ENCODE measurements at regions of chr1 and their contacts with region 1.

Region 1: DNA sequence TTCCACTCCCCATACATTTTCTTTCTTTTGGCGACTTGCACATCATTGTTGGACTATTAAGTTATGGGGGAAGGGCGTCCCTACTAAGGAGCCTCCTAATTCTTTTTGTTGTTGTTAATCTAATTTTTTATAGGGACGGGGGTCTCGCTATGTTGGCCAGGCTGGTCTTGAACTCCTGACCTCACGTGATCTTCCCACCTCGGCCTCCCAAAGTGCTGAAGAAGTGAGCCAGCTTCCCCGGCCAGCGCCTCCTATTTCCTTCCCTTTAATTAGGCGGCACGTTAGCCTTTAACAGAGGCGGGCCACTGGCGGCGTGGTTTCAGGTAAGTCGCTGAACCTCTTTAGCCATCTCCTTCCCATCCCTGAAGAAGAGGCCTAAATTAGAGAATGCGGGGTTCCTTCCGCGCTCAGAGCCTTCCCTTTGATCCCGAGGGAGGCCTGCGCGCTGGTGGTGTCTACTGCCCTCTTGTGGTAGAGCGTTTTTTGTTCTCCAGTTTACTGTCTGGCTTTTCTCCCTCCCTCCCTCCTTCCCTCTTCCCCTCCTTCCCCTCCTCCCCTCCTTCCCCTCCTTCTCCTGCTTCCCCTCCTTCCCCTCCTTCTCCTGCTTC is 38.1 kb downstream of the TNFRSF9 start:
- DNase-seq: peak; percentile 43 to 86
- ATAC-seq: peak; percentile 51 to 75 (median 69)
- H3K4me3 ChIP-seq: peak overlapping the region; percentile 1
- H3K4me3 Mint-ChIP-seq: peak overlapping the region; percentile 82
- H3K27ac ChIP-seq: no peak overlapping the region
- H3K27ac Mint-ChIP-seq: peak overlapping the region; percentile 85
- H3K4me1 ChIP-seq: peaks cover 35% of the 10 kb centered on the region
- H3K4me1 Mint-ChIP-seq: peaks cover 48 to 60% of the 10 kb centered on the region in 2 donors
- H3K27me3 ChIP-seq: no peaks in the 10 kb centered on the region
- H3K27me3 Mint-ChIP-seq: no peaks in the 10 kb centered on the region
- CTCF ChIP-seq: peak; percentile 68

Region 2: GRCh38 chr1:7667625-7668218 is 234.9 kb before region 1 on chr1:
- intact Hi-C with region 1: loop called (anchors 2 kb)
- DNase-seq: peak; percentile 86 to 88
- ATAC-seq: peak; percentile 83 to 94 (median 88)
- H3K4me3 ChIP-seq: no peak overlapping the region
- H3K4me3 Mint-ChIP-seq: no peak overlapping the region
- H3K27ac ChIP-seq: no peak overlapping the region
- H3K27ac Mint-ChIP-seq: no peak overlapping the region
- H3K4me1 ChIP-seq: peaks cover 16% of the 10 kb centered on the region
- H3K4me1 Mint-ChIP-seq: peaks cover 0 to 11% of the 10 kb centered on the region in 2 donors
- H3K27me3 ChIP-seq: no peaks in the 10 kb centered on the region
- H3K27me3 Mint-ChIP-seq: peaks cover 0 to 5% of the 10 kb centered on the region in 2 donors
- CTCF ChIP-seq: peak; percentile 94

Region 3: GRCh38 chr1:7808253-7808844 is 94.2 kb before region 1 on chr1:
- intact Hi-C with region 1: loop called (anchors 1 kb)
- DNase-seq: peak in 1 of 2 donors; percentile 54
- ATAC-seq: peak; percentile 37 to 89 (median 86)
- H3K4me3 ChIP-seq: no peak overlapping the region
- H3K4me3 Mint-ChIP-seq: no peak overlapping the region
- H3K27ac ChIP-seq: no peak overlapping the region
- H3K27ac Mint-ChIP-seq: peak overlapping the region in 1 of 2 donors; percentile 18
- H3K4me1 ChIP-seq: no peaks in the 10 kb centered on the region
- H3K4me1 Mint-ChIP-seq: peaks cover 0 to 5% of the 10 kb centered on the region in 2 donors
- H3K27me3 ChIP-seq: no peaks in the 10 kb centered on the region
- H3K27me3 Mint-ChIP-seq: no peaks in the 10 kb centered on the region
- CTCF ChIP-seq: peak; percentile 62

Region 4: GRCh38 chr1:7940745-7941436 is 38.3 kb after region 1 on chr1 and contains the start of gene TNFRSF9:
- intact Hi-C with region 1: loop called (anchors 2 kb)
- DNase-seq: peak; percentile 69 to 83
- ATAC-seq: peak; percentile 84 to 88 (median 86)
- H3K4me3 ChIP-seq: no peak within 1 kb of the TSS
- H3K4me3 Mint-ChIP-seq: peak within 1 kb of the TSS; percentile 87
- H3K27ac ChIP-seq: no peak within 1 kb of the TSS
- H3K27ac Mint-ChIP-seq: peak within 1 kb of the TSS; percentile 58 to 89
- H3K4me1 ChIP-seq: peaks cover 26% of the 10 kb centered on the region
- H3K4me1 Mint-ChIP-seq: peaks cover 50 to 52% of the 10 kb centered on the region in 2 donors
- H3K27me3 ChIP-seq: no peaks in the 10 kb centered on the region
- H3K27me3 Mint-ChIP-seq: no peaks in the 10 kb centered on the region
- CTCF ChIP-seq: no peak
- total RNA-seq, gene TNFRSF9: 2.6 to 6.4 (median 4.2) TPM

Region 5: GRCh38 chr1:7961216-7962015 is 58.8 kb after region 1 on chr1 and contains the start of gene PARK7:
- intact Hi-C with region 1: loop called (anchors 5 kb)
- DNase-seq: peak; percentile 100
- ATAC-seq: peak; percentile 91 to 99 (median 92)
- H3K4me3 ChIP-seq: peak within 1 kb of the TSS; percentile 79
- H3K4me3 Mint-ChIP-seq: peak within 1 kb of the TSS; percentile 98
- H3K27ac ChIP-seq: peak within 1 kb of the TSS; percentile 95
- H3K27ac Mint-ChIP-seq: peak within 1 kb of the TSS; percentile 98
- H3K4me1 ChIP-seq: peaks cover 18% of the 10 kb centered on the region
- H3K4me1 Mint-ChIP-seq: peaks cover 25 to 30% of the 10 kb centered on the region in 2 donors
- H3K27me3 ChIP-seq: no peaks in the 10 kb centered on the region
- H3K27me3 Mint-ChIP-seq: no peaks in the 10 kb centered on the region
- CTCF ChIP-seq: peak; percentile 53
- total RNA-seq, gene PARK7: 120 to 127 (median 127) TPM

Measured in natural killer cell (primary cell).